A549 (cell line): ENCODE measurements at regions of chr17 and their contacts with region 1.

Region 1: GRCh38 chr17:31494259-31495021 is 103.0 kb downstream of the RAB11FIP4 start:
- DNase-seq: no peak
- ATAC-seq: no peak
- H3K4me3 ChIP-seq: no peak overlapping the region
- H3K27ac ChIP-seq: no peak overlapping the region
- H3K4me1 ChIP-seq: no peaks in the 10 kb centered on the region
- CTCF ChIP-seq: no peak
- EP300 ChIP-seq: no peak
- POLR2A ChIP-seq: no peak
- RAD21 ChIP-seq: no peak

Region 2: GRCh38 chr17:31517524-31517923 is 23.1 kb after region 1 on chr17:
- CTCF ChIA-PET with region 1: interaction called, 11 read pairs
- POLR2A ChIA-PET with region 1: no interaction called
- DNase-seq: peak in 1 of 2 experiments; percentile 34
- ATAC-seq: peak; percentile 51 to 78; a peak in 4 of 6 replicates
- H3K4me3 ChIP-seq: no peak overlapping the region
- H3K27ac ChIP-seq: no peak overlapping the region
- H3K4me1 ChIP-seq: no peaks in the 10 kb centered on the region
- CTCF ChIP-seq: peak; percentile 35; the same call in 2 of the 3 replicates
- EP300 ChIP-seq: no peak
- POLR2A ChIP-seq: no peak
- RAD21 ChIP-seq: peak; percentile 57 to 69